Right cardiac atrium (tissue), 5 donors: ENCODE measurements at regions of chr17 and their contacts with region 1.

Region 1: GRCh38 chr17:57747221-57748017 is 2.3 kb upstream of the CCDC182 start:
- DNase-seq: no peak
- ATAC-seq: peak; percentile 36 to 52
- H3K4me3 ChIP-seq: no peak overlapping the region
- H3K27ac ChIP-seq: no peak overlapping the region
- H3K4me1 ChIP-seq: no peaks in the 10 kb centered on the region
- H3K27me3 ChIP-seq: no peaks in the 10 kb centered on the region

Region 2: GRCh38 chr17:57130761-57131461 is 616.5 kb before region 1 on chr17:
- intact Hi-C with region 1: loop called in 3 of 4 experiments (anchors 2 to 10 kb)
- DNase-seq: peak; percentile 81 to 94 (median 88)
- ATAC-seq: peak; percentile 91 to 94
- H3K4me3 ChIP-seq: no peak overlapping the region
- H3K27ac ChIP-seq: no peak overlapping the region
- H3K4me1 ChIP-seq: no peaks in the 10 kb centered on the region
- H3K27me3 ChIP-seq: no peaks in the 10 kb centered on the region